ENCODE measurements at regions of chr18 and their contacts with region 1.

Region 1: GRCh38 chr18:24786027-24786426 is 325.6 kb downstream of the HRH4 start:
- DNase-seq: peak; percentile 11
- H3K4me3 ChIP-seq: no peak overlapping the region
- H3K27ac ChIP-seq: no peak overlapping the region
- H3K4me1 ChIP-seq: peaks cover 10% of the 10 kb centered on the region
- H3K27me3 ChIP-seq: no peaks in the 10 kb centered on the region
- CTCF ChIP-seq: no peak
- POLR2A ChIP-seq: no peak

Region 2: GRCh38 chr18:24726727-24727492 is 59.1 kb before region 1 on chr18:
- CTCF ChIA-PET with region 1: interaction called, 3 read pairs
- POLR2A ChIA-PET with region 1: no interaction called
- dilution Hi-C with region 1: no loop called
- intact Hi-C with region 1: loop called (anchors 10 kb)
- DNase-seq: peak; percentile 77
- H3K4me3 ChIP-seq: peak overlapping the region in 1 of 3 experiments; percentile 10
- H3K27ac ChIP-seq: no peak overlapping the region
- H3K4me1 ChIP-seq: no peaks in the 10 kb centered on the region
- H3K27me3 ChIP-seq: peaks cover 18 to 21% of the 10 kb centered on the region in 2 experiments
- CTCF ChIP-seq: peak; percentile 77 to 87
- POLR2A ChIP-seq: no peak

Region 3: DNA sequence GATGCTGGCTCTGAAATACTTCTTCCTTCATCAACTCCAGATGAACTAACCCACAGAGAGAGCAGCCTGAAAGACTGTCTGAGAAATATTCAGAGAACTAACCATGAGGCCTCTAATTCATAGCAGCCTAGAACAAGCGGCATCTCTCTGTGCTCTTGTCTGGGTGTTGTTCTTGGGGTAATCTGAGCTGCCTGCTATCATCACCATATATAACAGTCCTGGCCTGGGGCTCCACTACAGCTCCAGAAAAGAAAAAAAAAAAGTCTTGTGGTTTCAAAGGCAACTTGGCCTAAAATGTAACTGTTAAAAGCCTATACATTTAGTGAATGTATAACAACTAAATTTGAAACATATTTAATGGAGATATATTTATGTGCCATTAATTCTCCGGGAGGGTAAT is 31.5 kb before region 1 on chr18:
- CTCF ChIA-PET with region 1: no interaction called
- POLR2A ChIA-PET with region 1: no interaction called
- dilution Hi-C with region 1: no loop called
- intact Hi-C with region 1: no loop called
- DNase-seq: no peak
- H3K4me3 ChIP-seq: no peak overlapping the region
- H3K27ac ChIP-seq: no peak overlapping the region
- H3K4me1 ChIP-seq: no peaks in the 10 kb centered on the region
- H3K27me3 ChIP-seq: peaks cover 4 to 9% of the 10 kb centered on the region in 2 experiments
- CTCF ChIP-seq: no peak
- POLR2A ChIP-seq: no peak

Region 4: DNA sequence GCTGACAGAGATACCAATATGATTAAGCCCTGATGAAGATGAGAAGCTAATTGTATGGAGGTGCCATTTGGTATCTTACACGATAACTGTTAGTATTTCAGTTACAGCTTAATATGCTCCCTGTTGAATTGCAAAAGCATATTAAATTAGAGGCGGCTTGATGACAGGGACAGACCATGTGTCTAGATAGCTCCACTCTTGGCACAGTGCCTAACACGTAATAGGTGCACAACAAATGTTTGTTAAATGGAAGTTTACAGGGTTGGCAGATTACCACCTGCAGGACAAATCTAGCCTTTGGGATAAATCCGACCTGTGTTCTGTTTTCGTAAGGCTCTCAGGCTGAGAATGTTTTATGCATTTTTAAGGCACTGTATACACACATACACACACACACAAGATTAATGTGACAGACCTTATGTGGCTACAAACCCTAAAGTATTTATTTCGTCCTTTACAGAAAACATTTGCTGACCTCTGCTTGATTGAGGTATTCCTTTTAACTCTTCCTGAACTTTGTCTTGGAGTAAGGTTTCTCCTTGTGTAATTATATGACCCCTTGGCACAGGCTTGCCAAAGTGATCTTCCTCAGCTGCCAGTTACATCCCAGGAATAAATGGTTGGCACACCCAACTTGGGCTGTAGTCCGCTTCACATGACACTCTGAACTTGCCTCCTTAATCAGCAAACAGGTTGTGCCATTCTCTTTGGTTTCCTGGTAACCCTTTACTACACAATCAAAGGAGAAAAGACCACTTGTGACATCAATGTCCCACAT is 23.3 kb after region 1 on chr18:
- CTCF ChIA-PET with region 1: no interaction called
- POLR2A ChIA-PET with region 1: no interaction called
- dilution Hi-C with region 1: no loop called
- intact Hi-C with region 1: no loop called
- DNase-seq: no peak
- H3K4me3 ChIP-seq: no peak overlapping the region
- H3K27ac ChIP-seq: no peak overlapping the region
- H3K4me1 ChIP-seq: peaks cover 13% of the 10 kb centered on the region
- H3K27me3 ChIP-seq: no peaks in the 10 kb centered on the region
- CTCF ChIP-seq: no peak
- POLR2A ChIP-seq: no peak